Aorta (tissue), 5 donors: ENCODE measurements at regions of chr12 and their contacts with region 1.

Region 1: DNA sequence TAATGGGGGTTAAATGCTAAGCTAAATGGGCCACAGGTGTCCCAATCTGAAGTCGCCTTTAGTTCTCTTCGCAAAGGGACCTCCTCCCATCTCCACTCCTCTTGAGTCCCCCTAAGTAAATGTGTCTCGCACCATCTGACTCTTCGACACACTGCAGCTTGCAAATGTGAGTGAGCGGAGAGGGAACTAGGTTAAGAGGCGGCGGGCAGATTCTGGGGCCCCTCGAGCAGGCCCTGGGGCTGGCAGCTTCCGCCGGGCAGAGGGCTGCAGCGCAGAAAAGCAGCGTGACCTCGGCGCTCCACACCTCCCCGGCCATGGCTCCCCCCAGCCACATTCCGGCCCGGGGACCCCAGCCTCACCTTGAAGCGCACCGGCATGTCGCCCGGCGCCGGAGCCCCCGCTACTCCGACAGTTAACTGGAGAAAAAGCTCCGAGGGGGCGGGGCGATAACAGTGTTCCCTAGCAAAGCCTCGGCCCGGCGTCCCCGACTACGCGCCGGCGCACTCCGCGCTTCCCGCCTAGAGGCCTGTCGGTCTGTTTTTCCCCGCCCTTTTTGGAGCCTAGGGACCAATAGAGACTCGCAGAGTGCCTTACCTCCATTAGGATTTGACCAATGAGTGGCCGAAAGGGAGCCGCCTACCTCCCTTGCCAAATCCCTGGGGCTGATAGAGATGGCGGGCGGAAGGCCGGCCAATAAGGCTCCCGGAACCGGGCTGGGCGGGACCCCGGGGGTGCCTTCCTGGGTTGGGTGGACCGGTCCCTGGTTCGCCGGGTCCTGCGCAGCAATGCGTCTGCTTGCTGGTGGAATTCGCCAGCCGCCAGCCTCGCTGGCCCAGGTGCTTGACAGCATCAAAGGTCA is at the start of gene MDM1:
- DNase-seq: peak; percentile 98 to 99
- ATAC-seq: peak; percentile 99
- H3K4me3 ChIP-seq: peak within 1 kb of the TSS; percentile 86 to 92
- H3K27ac ChIP-seq: no peak within 1 kb of the TSS
- H3K4me1 ChIP-seq: no peaks in the 10 kb centered on the region
- H3K27me3 ChIP-seq: no peaks in the 10 kb centered on the region
- total RNA-seq, gene MDM1: 12.6 to 15.0 TPM

Region 2: DNA sequence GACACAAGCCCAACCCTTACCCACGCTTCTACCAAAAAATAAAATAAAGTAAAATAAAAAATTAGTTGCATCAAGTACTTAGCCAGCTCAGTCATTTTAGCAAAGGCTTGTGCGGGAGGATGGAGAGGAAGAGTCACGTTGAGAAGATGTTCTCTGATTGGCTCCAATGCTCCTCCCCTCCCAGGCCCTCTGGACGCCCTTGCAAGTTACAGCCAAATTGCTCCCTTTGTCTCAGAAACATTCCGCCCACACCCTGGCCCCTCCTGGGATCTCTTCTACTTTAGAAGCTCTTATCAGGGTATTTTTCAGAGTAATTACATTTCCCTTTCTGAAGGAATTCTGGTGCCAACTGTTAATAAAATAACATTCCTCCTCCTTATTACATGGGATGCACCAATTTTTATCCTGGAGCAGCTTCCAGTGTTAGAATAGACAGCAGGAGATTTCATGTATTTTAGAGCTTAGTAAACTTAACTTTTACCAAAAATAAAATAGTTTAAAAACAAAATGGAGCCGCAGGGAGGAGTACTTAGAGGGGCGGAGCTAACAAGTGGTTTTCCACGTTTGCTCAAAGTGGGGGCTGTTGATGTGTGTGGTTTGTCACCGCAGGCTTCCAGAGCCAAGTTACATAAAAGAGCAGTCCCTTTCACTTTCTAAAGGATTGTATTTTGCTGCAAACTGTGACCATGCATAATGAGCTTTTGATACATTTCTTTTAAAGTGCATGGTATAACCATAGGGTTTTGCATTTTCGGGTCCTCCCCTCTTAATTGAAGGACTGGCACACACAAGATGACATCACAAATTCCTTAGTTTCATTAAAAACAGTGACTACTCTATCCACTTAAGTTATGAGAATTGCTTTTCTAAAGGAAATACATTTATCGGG is 206.9 kb after region 1 on chr12:
- intact Hi-C with region 1: loop called in 1 of 2 experiments (anchors 10 kb)
- DNase-seq: peak; percentile 82
- ATAC-seq: peak; percentile 90
- H3K4me3 ChIP-seq: peak overlapping the region in 1 of 2 donors; percentile 12
- H3K27ac ChIP-seq: peak overlapping the region; percentile 14 to 30
- H3K4me1 ChIP-seq: no peaks in the 10 kb centered on the region
- H3K27me3 ChIP-seq: no peaks in the 10 kb centered on the region